ENCODE measurements at regions of chr16 and their contacts with region 1.

Region 1: DNA sequence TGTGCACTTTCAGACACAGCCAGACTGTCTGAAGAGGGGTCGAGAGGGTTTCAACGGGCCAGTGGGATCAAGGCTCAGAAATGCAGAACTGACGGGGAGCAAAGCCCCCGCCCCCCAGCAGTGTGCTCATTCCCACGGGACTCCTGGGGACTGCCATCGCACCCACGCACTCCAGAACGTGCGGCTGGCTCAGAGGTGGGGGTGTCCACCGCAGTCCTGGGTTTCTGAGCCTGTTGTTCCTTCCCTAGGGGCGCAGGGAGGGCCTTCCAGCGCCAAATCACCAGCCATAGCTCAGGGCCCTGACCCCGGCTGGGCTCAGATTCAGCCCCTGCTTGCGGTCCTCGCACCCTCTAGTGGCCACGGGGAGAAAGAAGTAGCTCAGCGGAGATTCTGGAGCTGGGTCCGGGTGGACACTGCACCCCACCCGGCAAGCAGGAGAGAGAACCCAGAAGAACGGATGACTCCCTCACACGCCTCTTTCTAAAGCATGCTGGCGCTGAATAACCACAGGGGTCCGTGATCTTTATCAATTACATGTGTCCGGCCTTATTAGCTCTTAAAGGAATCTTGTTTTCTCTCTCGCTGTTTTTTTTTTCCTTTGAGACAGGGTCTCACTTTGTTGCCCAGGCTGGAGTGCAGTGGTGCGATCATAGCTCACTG is 45.0 kb upstream of the USP7 start:
- DNase-seq: peak; percentile 51 to 64 (median 56)
- H3K4me3 ChIP-seq: no peak overlapping the region
- H3K4me3 Mint-ChIP-seq: peak overlapping the region in 1 of 8 donors; percentile 45
- H3K27ac ChIP-seq: no peak overlapping the region
- H3K27ac Mint-ChIP-seq: no peak overlapping the region
- H3K4me1 ChIP-seq: peaks cover 7% of the 10 kb centered on the region
- H3K4me1 Mint-ChIP-seq: peaks cover 0 to 6% (median under 1%) of the 10 kb centered on the region in 4 donors
- H3K27me3 ChIP-seq: no peaks in the 10 kb centered on the region
- H3K27me3 Mint-ChIP-seq: peaks cover 1 to 16% of the 10 kb centered on the region in 2 donors

Region 2: GRCh38 chr16:8878521-8878911 is 130.2 kb before region 1 on chr16:
- CTCF ChIA-PET with region 1: interaction called, 21 read pairs
- POLR2A ChIA-PET with region 1: no interaction called
- intact Hi-C with region 1: no loop called
- DNase-seq: no peak
- H3K4me3 ChIP-seq: no peak overlapping the region
- H3K4me3 Mint-ChIP-seq: no peak overlapping the region
- H3K27ac ChIP-seq: no peak overlapping the region
- H3K27ac Mint-ChIP-seq: no peak overlapping the region
- H3K4me1 ChIP-seq: peaks cover 3% of the 10 kb centered on the region
- H3K4me1 Mint-ChIP-seq: peaks cover 3 to 20% (median 10%) of the 10 kb centered on the region in 4 donors
- H3K27me3 ChIP-seq: no peaks in the 10 kb centered on the region
- H3K27me3 Mint-ChIP-seq: no peaks in the 10 kb centered on the region

Region 3: GRCh38 chr16:8899709-8900317 is 108.9 kb before region 1 on chr16:
- CTCF ChIA-PET with region 1: interaction called, 12 read pairs
- POLR2A ChIA-PET with region 1: no interaction called
- intact Hi-C with region 1: loop called (anchors 1 kb)
- DNase-seq: no peak
- H3K4me3 ChIP-seq: no peak overlapping the region
- H3K4me3 Mint-ChIP-seq: no peak overlapping the region
- H3K27ac ChIP-seq: no peak overlapping the region
- H3K27ac Mint-ChIP-seq: peak overlapping the region in 4 of 7 donors; percentile 16 to 52 (median 24)
- H3K4me1 ChIP-seq: no peaks in the 10 kb centered on the region
- H3K4me1 Mint-ChIP-seq: no peaks in the 10 kb centered on the region
- H3K27me3 ChIP-seq: no peaks in the 10 kb centered on the region
- H3K27me3 Mint-ChIP-seq: no peaks in the 10 kb centered on the region

Region 4: GRCh38 chr16:8951447-8952280 is 57.1 kb before region 1 on chr16:
- CTCF ChIA-PET with region 1: interaction called, 18 read pairs
- POLR2A ChIA-PET with region 1: no interaction called
- intact Hi-C with region 1: no loop called
- DNase-seq: no peak
- H3K4me3 ChIP-seq: no peak overlapping the region
- H3K4me3 Mint-ChIP-seq: peak overlapping the region; percentile 48 to 76 (median 64)
- H3K27ac ChIP-seq: no peak overlapping the region
- H3K27ac Mint-ChIP-seq: peak overlapping the region in 5 of 7 donors; percentile 17 to 75 (median 57)
- H3K4me1 ChIP-seq: peaks cover 95% of the 10 kb centered on the region
- H3K4me1 Mint-ChIP-seq: peaks cover 65 to 92% (median 81%) of the 10 kb centered on the region in 4 donors
- H3K27me3 ChIP-seq: no peaks in the 10 kb centered on the region
- H3K27me3 Mint-ChIP-seq: no peaks in the 10 kb centered on the region

Region 5: DNA sequence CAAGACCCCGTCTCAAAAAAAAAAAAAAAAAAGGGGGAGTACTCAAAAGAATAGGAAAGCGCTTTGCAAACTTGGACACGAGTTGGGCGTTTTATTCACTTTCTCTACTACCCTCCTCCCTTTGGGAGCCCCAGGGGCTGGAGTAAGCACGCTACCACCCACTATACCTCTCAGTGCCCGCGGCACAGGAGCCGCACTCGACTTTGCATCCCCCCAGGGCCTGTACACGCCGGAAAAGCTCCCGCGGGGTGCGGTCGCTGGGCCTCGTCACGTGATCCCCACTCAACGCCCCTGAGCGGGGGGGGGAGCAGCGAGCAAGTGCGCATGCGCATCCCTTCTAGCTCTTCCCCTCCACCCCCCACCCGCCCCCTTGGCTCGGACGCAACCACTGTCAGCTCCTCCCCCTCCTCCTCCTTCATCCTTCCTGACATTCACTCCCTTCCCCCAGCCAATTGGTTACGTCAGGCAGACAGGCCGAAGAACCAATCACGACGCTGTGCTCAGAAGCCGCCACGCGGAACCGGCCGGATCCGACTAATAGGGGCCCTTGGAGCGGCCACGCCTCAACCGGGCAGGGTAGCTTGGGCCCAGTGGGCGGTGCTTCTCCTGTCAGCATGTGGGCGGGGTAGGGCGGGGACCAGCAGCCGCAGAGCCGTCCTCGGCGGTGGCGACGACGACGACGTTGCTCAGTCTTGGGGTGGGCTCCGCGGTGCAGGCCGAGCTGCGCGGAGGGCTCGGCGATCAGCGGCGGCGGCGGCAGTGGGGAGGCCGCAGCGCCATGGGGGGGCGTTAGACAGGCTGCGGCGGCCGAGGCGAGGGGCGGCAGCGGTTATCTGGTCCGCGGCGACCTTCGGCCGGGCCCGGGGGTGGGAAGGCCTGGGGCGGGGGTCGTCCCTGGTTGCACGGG is 82.5 kb after region 1 on chr16 and contains the start of gene HAPSTR1:
- CTCF ChIA-PET with region 1: interaction called, 4 read pairs
- POLR2A ChIA-PET with region 1: interaction called, 12 read pairs
- intact Hi-C with region 1: no loop called
- DNase-seq: peak; percentile 97 to 100 (median 100)
- H3K4me3 ChIP-seq: peak within 1 kb of the TSS; percentile 69 to 98
- H3K4me3 Mint-ChIP-seq: peak within 1 kb of the TSS; percentile 96 to 100 (median 99)
- H3K27ac ChIP-seq: peak within 1 kb of the TSS; percentile 93
- H3K27ac Mint-ChIP-seq: peak within 1 kb of the TSS; percentile 96 to 99 (median 98)
- H3K4me1 ChIP-seq: peaks cover 43% of the 10 kb centered on the region
- H3K4me1 Mint-ChIP-seq: peaks cover 30 to 53% (median 35%) of the 10 kb centered on the region in 4 donors
- H3K27me3 ChIP-seq: no peaks in the 10 kb centered on the region
- H3K27me3 Mint-ChIP-seq: no peaks in the 10 kb centered on the region
- total RNA-seq, gene HAPSTR1: 89.6 to 90.5 TPM